Posterior cingulate gyrus (tissue), 11 donors: ENCODE measurements at regions of chr6 and their contacts with region 1.

Region 1: GRCh38 chr6:109382576-109383437 is 540 bp upstream of the CD164 start:
- DNase-seq: peak; percentile 81 to 98 (median 88)

Region 2: GRCh38 chr6:109002051-109002697 is 380.6 kb before region 1 on chr6:
- intact Hi-C with region 1: loop called (anchors 5 kb)
- DNase-seq: no peak

Region 3: GRCh38 chr6:109187399-109188114 is 195.2 kb before region 1 on chr6:
- intact Hi-C with region 1: loop called (anchors 1 kb)
- DNase-seq: peak in 9 of 10 donors; percentile 12 to 90 (median 62)

Region 4: GRCh38 chr6:109202409-109203284 is 180.2 kb before region 1 on chr6:
- intact Hi-C with region 1: no loop called
- DNase-seq: no peak

Region 5: GRCh38 chr6:109318328-109318876 is 64.4 kb before region 1 on chr6:
- intact Hi-C with region 1: loop called (anchors 5 kb)
- DNase-seq: peak; percentile 31 to 93 (median 68)

Region 6: GRCh38 chr6:109743739-109744138 is 360.9 kb after region 1 on chr6:
- intact Hi-C with region 1: no loop called
- DNase-seq: no peak